Panc1 (cell line): ENCODE measurements at regions of chr3 and their contacts with region 1.

Region 1: DNA sequence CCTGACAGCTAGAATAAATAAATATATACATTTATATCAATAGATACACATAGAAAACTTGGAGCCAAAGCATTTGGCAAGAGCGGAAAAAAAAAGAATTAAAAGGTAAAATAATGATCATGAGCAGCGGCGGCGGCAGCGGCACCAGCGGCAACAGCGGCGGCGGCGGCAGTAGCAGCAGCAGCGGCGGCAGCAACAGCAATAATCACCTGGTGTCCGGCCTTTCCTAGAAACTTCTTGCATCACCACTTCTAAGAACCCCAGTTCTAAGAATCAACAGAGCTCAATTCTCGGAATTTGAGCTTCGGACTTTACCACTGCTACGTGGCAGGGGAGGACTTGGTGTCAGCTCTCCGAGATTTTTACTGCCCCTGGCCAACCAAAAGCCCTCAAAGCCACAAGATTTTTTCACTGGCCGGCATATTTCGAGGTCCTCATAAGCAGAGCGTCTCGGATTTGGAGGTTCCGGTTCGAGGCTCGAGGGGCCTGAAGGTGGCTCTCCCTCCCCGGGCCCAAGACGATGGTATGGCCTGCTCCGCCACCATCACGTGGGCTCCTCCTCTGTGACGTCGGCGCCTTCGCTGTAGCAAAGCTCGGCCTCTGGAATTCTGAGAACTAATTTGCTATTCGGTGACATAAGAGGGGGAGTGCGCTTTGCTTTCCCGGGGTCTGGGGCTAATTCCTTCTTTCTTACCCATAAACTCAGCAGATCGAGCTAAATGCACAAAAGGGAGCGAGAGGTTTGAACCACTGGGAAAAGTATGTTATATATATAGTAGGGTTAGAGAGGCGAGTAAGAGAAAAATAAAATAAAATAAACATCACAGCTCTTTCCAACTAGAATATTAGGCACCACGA is at the start of gene BCL6:
- DNase-seq: peak; percentile 91
- ATAC-seq: peak; percentile 75
- H3K4me3 ChIP-seq: peak within 1 kb of the TSS; percentile 60 to 94
- H3K27ac ChIP-seq: peak within 1 kb of the TSS; percentile 100
- H3K4me1 ChIP-seq: peaks cover 54% of the 10 kb centered on the region
- H3K27me3 ChIP-seq: no peaks in the 10 kb centered on the region
- CTCF ChIP-seq: no peak
- total RNA-seq, gene BCL6: 21.5 TPM

Region 2: DNA sequence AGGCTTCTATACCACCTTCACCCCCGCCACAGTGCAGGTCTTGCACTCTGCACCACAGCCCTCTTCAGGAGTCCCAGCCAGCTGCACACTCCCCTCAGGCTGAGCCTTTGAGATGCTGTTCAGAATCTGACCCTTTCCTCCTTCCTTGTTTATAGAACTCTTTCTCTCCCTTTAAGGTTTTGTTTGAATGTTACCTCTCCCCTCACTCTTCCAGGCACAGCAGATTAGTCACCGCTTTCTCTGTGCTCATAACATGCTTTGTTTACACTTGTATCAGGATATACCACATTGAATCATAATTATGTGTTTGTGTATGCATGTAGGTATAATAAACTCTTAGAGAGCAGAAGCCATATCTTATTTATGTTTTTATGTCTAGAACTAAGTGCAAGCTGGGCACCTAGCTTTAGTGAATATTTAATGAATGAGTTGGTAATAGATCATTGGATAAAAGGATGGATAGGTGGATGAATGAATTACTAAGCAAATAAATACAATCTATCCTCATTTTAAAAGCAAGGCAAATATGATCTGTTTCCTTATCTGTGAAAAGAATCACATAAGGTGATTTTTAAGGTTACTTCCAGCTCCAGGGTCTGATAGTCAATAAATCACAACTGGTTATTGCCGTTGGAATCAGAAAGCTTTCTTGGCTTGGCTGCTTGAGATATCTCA is 168.3 kb after region 1 on chr3:
- CTCF ChIA-PET with region 1: no interaction called
- POLR2A ChIA-PET with region 1: no interaction called
- in situ Hi-C with region 1: loop called (anchors 10 kb)
- intact Hi-C with region 1: loop called (anchors 5 kb)
- DNase-seq: peak; percentile 57
- ATAC-seq: peak; percentile 91
- H3K4me3 ChIP-seq: no peak overlapping the region
- H3K27ac ChIP-seq: peak overlapping the region; percentile 94
- H3K4me1 ChIP-seq: peaks cover 34% of the 10 kb centered on the region
- H3K27me3 ChIP-seq: no peaks in the 10 kb centered on the region
- CTCF ChIP-seq: no peak

Region 3: GRCh38 chr3:187935623-187936156 is 190.3 kb after region 1 on chr3:
- CTCF ChIA-PET with region 1: interaction called, 4 read pairs
- POLR2A ChIA-PET with region 1: interaction called, 13 read pairs
- in situ Hi-C with region 1: no loop called
- intact Hi-C with region 1: no loop called
- DNase-seq: no peak
- ATAC-seq: no peak
- H3K4me3 ChIP-seq: no peak overlapping the region
- H3K27ac ChIP-seq: no peak overlapping the region
- H3K4me1 ChIP-seq: no peaks in the 10 kb centered on the region
- H3K27me3 ChIP-seq: peaks cover 2% of the 10 kb centered on the region; the same call in 1 of the 2 replicates
- CTCF ChIP-seq: no peak

Region 4: GRCh38 chr3:188154014-188154808 is 408.8 kb after region 1 on chr3 and contains the start of gene LPP:
- CTCF ChIA-PET with region 1: interaction called, 5 read pairs
- POLR2A ChIA-PET with region 1: interaction called, 3 read pairs
- in situ Hi-C with region 1: no loop called
- intact Hi-C with region 1: loop called (anchors 5 kb)
- DNase-seq: no peak
- ATAC-seq: peak; percentile 94
- H3K4me3 ChIP-seq: peak within 1 kb of the TSS; percentile 81 to 95
- H3K27ac ChIP-seq: peak within 1 kb of the TSS; percentile 93
- H3K4me1 ChIP-seq: peaks cover 36% of the 10 kb centered on the region
- H3K27me3 ChIP-seq: no peaks in the 10 kb centered on the region
- CTCF ChIP-seq: no peak; the same call in 1 of the 2 replicates
- total RNA-seq, gene LPP: 90.0 TPM

Region 5: GRCh38 chr3:188294823-188295487 is 549.5 kb after region 1 on chr3:
- CTCF ChIA-PET with region 1: interaction called, 7 read pairs
- POLR2A ChIA-PET with region 1: no interaction called
- in situ Hi-C with region 1: loop called (anchors 25 kb)
- intact Hi-C with region 1: no loop called
- DNase-seq: peak; percentile 93
- ATAC-seq: peak; percentile 94
- H3K4me3 ChIP-seq: peak overlapping the region; percentile 13 to 31
- H3K27ac ChIP-seq: peak overlapping the region; percentile 92
- H3K4me1 ChIP-seq: peaks cover 66% of the 10 kb centered on the region
- H3K27me3 ChIP-seq: no peaks in the 10 kb centered on the region
- CTCF ChIP-seq: no peak

Region 6: GRCh38 chr3:188664795-188665194 is 919.4 kb after region 1 on chr3:
- CTCF ChIA-PET with region 1: no interaction called
- POLR2A ChIA-PET with region 1: no interaction called
- in situ Hi-C with region 1: no loop called
- intact Hi-C with region 1: loop called (anchors 10 kb)
- DNase-seq: peak; percentile 13
- ATAC-seq: peak; percentile 86
- H3K4me3 ChIP-seq: no peak overlapping the region
- H3K27ac ChIP-seq: no peak overlapping the region
- H3K4me1 ChIP-seq: no peaks in the 10 kb centered on the region
- H3K27me3 ChIP-seq: no peaks in the 10 kb centered on the region
- CTCF ChIP-seq: peak; percentile 76

Region 7: DNA sequence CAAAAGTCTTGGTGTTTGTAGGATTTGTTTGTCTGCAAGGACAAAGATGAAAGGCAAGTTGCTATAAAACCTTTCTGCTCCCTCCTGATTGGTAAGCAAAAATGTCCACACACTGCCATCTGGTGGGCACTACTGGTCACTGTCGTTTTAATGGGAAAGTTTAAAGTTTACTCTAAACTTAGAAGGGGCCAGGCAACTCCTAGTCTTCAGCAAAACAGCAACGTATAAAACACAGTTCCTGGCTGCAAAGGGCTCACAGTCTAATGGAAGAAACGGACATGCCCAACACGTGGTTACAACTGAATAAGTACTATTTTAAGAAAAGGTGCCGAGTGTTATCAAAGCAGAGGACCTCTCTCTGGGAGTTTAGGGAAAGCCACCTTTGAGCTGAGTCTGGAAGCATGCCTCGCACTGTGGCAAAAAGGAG is 1402.7 kb after region 1 on chr3:
- CTCF ChIA-PET with region 1: no interaction called
- POLR2A ChIA-PET with region 1: no interaction called
- in situ Hi-C with region 1: loop called (anchors 10 kb)
- intact Hi-C with region 1: no loop called
- DNase-seq: no peak
- ATAC-seq: peak; percentile 83
- H3K4me3 ChIP-seq: no peak overlapping the region
- H3K27ac ChIP-seq: no peak overlapping the region
- H3K4me1 ChIP-seq: peaks cover 4% of the 10 kb centered on the region; the same call in 1 of the 2 replicates
- H3K27me3 ChIP-seq: peaks cover 10% of the 10 kb centered on the region; the same call in 1 of the 2 replicates
- CTCF ChIP-seq: peak; percentile 88